A673 (cell line): ENCODE measurements at regions of chr17 and their contacts with region 1.

Region 1: GRCh38 chr17:50986989-50987660 is 121.0 kb upstream of the TOB1 start:
- DNase-seq: no peak
- H3K4me3 ChIP-seq: no peak overlapping the region
- H3K27ac ChIP-seq: no peak overlapping the region
- H3K4me1 ChIP-seq: no peaks in the 10 kb centered on the region
- H3K27me3 ChIP-seq: no peaks in the 10 kb centered on the region
- CTCF ChIP-seq: no peak

Region 2: GRCh38 chr17:50350713-50351112 is 636.4 kb before region 1 on chr17:
- CTCF ChIA-PET with region 1: no interaction called
- POLR2A ChIA-PET with region 1: interaction called, 10 read pairs
- intact Hi-C with region 1: no loop called
- DNase-seq: no peak
- H3K4me3 ChIP-seq: no peak overlapping the region
- H3K27ac ChIP-seq: no peak overlapping the region
- H3K4me1 ChIP-seq: no peaks in the 10 kb centered on the region
- H3K27me3 ChIP-seq: no peaks in the 10 kb centered on the region
- CTCF ChIP-seq: no peak

Region 3: GRCh38 chr17:50865984-50866774 is 120.9 kb before region 1 on chr17 and contains the start of gene TOB1:
- CTCF ChIA-PET with region 1: no interaction called
- POLR2A ChIA-PET with region 1: no interaction called
- intact Hi-C with region 1: no loop called
- DNase-seq: peak; percentile 96
- H3K4me3 ChIP-seq: peak within 1 kb of the TSS; percentile 58
- H3K27ac ChIP-seq: peak within 1 kb of the TSS; percentile 95
- H3K4me1 ChIP-seq: peaks cover 6% of the 10 kb centered on the region
- H3K27me3 ChIP-seq: no peaks in the 10 kb centered on the region
- CTCF ChIP-seq: no peak
- total RNA-seq, gene TOB1: 19.3 and 24.4 TPM in 2 replicates

Region 4: DNA sequence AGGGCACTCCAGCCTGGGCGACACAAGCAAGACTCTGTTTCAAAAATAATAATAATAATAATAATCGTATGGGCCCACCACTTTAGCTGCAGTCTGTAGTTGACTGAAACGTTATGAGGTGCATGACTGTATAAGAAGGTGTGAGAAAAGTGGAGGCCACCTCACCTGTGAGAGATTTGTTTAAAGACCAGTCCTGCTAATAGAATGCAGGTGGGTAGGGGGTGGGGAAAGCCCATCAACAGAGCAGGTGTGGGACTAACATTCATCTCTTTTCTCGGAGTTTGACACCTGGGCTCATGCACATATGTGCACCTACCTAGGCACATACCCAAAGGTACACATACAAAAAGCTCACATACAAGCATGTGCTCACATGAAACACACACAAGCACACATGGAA is 53.0 kb before region 1 on chr17:
- CTCF ChIA-PET with region 1: no interaction called
- POLR2A ChIA-PET with region 1: no interaction called
- intact Hi-C with region 1: no loop called
- DNase-seq: no peak
- H3K4me3 ChIP-seq: no peak overlapping the region
- H3K27ac ChIP-seq: no peak overlapping the region
- H3K4me1 ChIP-seq: peaks cover 6% of the 10 kb centered on the region
- H3K27me3 ChIP-seq: no peaks in the 10 kb centered on the region
- CTCF ChIP-seq: no peak

Region 5: DNA sequence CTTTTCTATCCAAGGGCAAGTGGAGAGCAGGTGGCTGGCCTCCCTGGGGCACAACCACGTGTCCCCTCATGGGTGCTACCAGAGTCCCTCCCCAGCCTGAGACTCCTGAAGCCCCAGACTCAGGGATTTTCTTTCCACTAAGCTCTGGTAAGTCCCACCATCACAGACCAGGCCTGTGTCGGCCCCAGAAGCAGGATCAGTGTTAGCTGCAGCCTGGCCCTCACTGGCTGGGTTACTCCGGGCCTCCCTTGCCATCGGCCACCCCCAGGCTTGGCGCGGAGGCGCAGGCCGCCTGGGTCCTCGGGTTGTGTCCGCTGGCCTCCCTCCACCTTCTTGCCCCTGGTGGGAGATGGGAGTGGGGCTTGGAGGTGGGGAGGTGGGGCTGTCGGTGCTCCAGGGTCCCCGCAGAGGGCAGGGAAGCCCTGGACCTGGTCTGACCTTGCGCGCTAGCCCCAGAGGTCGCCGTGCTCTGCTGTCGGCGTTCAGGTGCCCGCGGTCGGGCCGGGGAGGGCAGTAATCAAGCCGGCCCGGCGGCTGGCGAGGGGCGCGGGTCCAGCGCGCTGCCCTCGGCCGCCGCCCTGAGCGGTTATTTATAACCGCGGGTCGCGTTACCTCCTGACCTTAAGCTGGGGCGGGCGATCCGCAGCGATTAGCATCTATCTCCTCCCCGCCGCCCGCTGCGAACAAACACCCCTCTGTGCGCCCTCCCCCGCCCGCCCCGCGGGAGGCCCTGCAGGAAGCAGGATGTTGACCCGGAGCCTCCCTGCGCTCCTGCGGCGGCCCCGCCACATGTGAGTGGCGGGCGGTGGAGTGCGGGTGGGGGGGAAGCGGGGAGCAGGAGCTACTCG is 42.8 kb before region 1 on chr17:
- CTCF ChIA-PET with region 1: no interaction called
- POLR2A ChIA-PET with region 1: no interaction called
- intact Hi-C with region 1: loop called (anchors 5 kb)
- DNase-seq: peak; percentile 65
- H3K4me3 ChIP-seq: no peak overlapping the region
- H3K27ac ChIP-seq: no peak overlapping the region
- H3K4me1 ChIP-seq: peaks cover 15% of the 10 kb centered on the region
- H3K27me3 ChIP-seq: no peaks in the 10 kb centered on the region
- CTCF ChIP-seq: no peak

Region 6: DNA sequence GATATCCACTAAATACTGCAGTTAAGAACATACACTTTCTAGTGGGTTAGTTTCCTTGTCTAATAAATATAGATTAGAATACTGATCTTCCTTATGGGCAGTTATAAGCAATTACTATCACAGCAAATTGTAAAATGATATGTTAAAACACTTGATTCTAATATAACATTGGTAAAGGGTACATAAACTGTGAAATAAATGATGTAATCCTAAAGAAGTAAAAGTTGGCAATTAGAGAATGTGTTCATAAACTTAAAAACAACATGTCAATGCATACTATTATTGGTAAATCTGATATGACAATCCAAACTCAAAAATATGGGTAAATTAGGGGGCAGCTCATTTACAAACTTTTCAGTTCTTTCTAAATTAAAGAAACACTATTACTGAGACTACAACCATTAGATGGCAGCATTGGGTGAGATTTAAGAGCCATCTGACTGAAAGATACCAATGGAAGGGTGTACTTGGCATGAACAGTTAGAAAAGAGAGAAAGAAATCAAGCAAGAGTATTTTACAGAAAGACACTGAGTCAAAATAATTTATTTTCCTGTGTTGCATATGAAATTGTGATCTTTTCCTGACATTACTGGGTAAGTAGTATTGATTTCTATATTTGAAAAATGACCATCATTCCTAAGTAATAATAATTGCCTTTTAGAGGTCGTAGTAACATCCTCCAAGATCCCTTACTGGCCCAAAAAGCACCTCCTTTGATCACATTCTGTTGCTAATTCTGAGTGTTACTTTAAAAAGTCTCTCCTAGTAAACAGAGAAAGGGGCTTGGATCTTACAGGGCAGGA is 13.9 kb after region 1 on chr17:
- CTCF ChIA-PET with region 1: no interaction called
- POLR2A ChIA-PET with region 1: no interaction called
- intact Hi-C with region 1: loop called (anchors 1 kb)
- DNase-seq: peak; percentile 77
- H3K4me3 ChIP-seq: no peak overlapping the region
- H3K27ac ChIP-seq: no peak overlapping the region
- H3K4me1 ChIP-seq: no peaks in the 10 kb centered on the region
- H3K27me3 ChIP-seq: no peaks in the 10 kb centered on the region
- CTCF ChIP-seq: peak; percentile 70

Region 7: DNA sequence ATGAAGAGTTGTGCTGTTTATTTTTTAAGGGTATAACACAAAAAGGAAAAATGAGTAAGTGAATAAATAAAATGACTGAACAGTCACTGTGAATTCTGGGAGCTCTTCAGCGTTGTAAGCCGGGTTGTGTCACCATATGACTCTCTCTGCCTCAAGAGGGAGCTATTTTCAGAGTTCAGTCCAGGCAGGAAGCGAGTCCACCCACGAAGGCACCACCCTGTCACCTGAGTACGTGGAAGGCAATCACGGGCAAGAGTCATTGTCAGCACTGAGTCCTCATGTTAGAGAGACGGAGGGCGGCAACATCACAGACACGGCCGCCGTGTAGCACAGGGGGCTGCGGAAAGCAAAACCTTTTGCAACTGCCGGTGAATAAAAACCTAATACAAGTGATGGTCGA is 500.8 kb after region 1 on chr17:
- CTCF ChIA-PET with region 1: no interaction called
- POLR2A ChIA-PET with region 1: no interaction called
- intact Hi-C with region 1: no loop called
- DNase-seq: peak; percentile 37
- H3K4me3 ChIP-seq: no peak overlapping the region
- H3K27ac ChIP-seq: no peak overlapping the region
- H3K4me1 ChIP-seq: no peaks in the 10 kb centered on the region
- H3K27me3 ChIP-seq: no peaks in the 10 kb centered on the region
- CTCF ChIP-seq: peak; percentile 63